ENCODE measurements at regions of chr9 and their contacts with region 1.

Region 1: DNA sequence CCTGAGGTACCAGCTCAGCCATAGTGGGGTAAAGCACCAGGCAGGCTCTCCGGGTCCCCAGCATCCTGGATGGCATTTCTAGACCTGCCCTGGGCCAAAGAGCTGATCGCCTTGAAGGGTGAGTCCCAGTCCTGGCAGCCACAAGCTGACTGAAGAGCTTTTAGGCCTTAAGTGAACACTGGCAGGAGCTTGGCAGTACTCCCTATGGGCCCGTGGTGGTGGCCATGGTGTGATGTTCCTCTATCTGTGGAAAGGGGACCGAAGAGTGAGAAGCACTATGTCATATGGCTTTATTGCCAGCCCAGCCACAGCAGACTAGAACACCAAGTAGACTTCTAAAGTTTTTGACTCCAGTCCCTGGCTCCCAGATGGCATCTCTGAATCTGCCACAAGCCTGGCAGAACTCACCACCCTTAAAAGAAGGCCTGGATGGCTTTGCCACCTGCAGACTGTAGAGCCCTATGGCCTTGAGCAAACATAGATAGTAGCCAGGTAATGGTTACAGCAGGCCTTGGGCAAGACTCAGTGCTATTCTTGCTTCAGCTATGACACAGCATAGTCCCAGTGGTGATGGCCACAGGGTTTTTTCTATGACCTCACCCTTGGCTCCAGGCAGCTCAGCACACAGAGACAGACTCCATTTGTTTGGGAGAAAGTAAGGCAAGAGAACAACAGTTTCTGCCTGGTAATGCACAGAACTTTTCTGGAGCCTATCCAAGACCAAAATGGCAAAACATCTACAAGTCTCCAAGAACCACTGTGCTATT is 801.5 kb upstream of the DMAC1 start:
- DNase-seq: peak in 8 of 10 donors; percentile 19 to 74 (median 70)
- H3K4me3 ChIP-seq: no peak overlapping the region
- H3K27ac ChIP-seq: peak overlapping the region in 58 of 59 donors; percentile 46 to 97 (median 88)
- H3K27me3 ChIP-seq: no peaks in the 10 kb centered on the region
- CTCF ChIP-seq: peak in 2 of 56 donors; percentile 16 to 22

Region 2: GRCh38 chr9:8486095-8486494 is 115.0 kb before region 1 on chr9:
- intact Hi-C with region 1: no loop called
- DNase-seq: peak in 2 of 10 donors; percentile 44 to 53
- H3K4me3 ChIP-seq: no peak overlapping the region
- H3K27ac ChIP-seq: peak overlapping the region in 11 of 59 donors; percentile 3 to 52 (median 26)
- H3K27me3 ChIP-seq: no peaks in the 10 kb centered on the region
- CTCF ChIP-seq: peak in 45 of 56 donors; percentile 9 to 57 (median 33)

Region 3: GRCh38 chr9:8514760-8515159 is 86.3 kb before region 1 on chr9:
- intact Hi-C with region 1: no loop called
- DNase-seq: no peak
- H3K4me3 ChIP-seq: no peak overlapping the region
- H3K27ac ChIP-seq: no peak overlapping the region
- H3K27me3 ChIP-seq: no peaks in the 10 kb centered on the region
- CTCF ChIP-seq: peak in 4 of 56 donors; percentile 15 to 22 (median 16)

Region 4: GRCh38 chr9:8552732-8553131 is 48.4 kb before region 1 on chr9:
- intact Hi-C with region 1: loop called in 1 of 2 experiments (anchors 5 kb)
- DNase-seq: peak in 9 of 10 donors; percentile 51 to 92 (median 80)
- H3K4me3 ChIP-seq: peak overlapping the region in 2 of 59 donors; percentile 10 to 38
- H3K27ac ChIP-seq: peak overlapping the region in 57 of 59 donors; percentile 29 to 95 (median 83)
- H3K27me3 ChIP-seq: no peaks in the 10 kb centered on the region
- CTCF ChIP-seq: peak in 6 of 56 donors; percentile 8 to 29 (median 16)

Region 5: DNA sequence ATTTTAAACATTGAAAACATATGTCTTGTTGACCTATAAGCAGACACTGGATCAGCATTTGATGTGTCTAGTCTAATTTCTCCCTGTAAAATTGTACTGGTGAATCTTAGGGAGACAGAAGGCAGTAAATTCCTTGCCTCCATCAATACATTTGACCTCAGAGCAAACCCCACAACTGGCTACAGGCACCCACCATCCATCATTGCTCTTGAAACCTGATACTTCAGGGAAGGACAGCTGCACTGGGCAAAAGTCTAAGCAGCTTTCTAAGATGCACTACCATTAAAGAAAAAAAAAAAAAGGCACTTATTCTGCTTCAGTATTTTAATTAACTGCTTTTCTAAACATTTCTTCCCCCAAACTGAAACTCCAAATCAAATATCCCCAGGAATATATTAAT is 249.8 kb after region 1 on chr9:
- intact Hi-C with region 1: loop called in 1 of 2 experiments (anchors 5 kb)
- DNase-seq: no peak
- H3K4me3 ChIP-seq: peak overlapping the region in 32 of 59 donors; percentile 0 to 94 (median 20)
- H3K27ac ChIP-seq: peak overlapping the region in 51 of 59 donors; percentile 1 to 98 (median 75)
- H3K27me3 ChIP-seq: no peaks in the 10 kb centered on the region
- CTCF ChIP-seq: no peak